ENCODE measurements at regions of chr1 and their contacts with region 1.

Region 1: DNA sequence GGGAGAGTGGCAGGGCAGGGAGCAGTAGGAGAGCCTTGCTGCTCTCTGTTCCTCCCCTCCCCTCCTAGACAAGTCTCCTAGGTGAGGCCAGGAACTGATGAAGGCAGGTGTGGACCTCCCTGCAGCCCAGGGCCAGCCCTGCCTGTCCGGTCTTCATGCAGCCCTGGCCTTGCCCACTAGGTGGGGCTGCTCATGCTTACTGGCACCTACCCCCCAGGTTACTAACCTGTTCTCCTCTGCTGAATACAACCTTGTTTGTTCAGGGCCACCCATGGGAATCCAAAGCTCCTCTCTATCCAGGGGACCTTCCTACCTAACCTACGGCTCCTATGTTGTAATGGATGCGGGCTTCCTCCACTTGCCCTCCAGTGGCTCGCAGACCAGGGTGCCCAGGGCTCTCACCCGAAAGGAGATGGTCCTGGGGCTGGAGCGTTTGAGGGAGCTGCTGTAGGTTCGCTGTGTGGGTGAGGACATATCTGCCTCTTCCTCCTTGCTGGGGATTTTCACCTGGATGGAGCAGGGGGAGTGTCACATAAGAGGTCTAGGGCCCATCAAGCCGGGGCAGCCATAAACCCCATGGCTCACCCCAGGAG is 7.9 kb upstream of the TNNT2 start:
- DNase-seq: peak; percentile 80
- H3K4me3 Mint-ChIP-seq: no peak overlapping the region
- H3K27ac Mint-ChIP-seq: no peak overlapping the region
- H3K4me1 Mint-ChIP-seq: peaks cover 19% of the 10 kb centered on the region
- H3K27me3 Mint-ChIP-seq: no peaks in the 10 kb centered on the region
- CTCF ChIP-seq: peak; percentile 99

Region 2: DNA sequence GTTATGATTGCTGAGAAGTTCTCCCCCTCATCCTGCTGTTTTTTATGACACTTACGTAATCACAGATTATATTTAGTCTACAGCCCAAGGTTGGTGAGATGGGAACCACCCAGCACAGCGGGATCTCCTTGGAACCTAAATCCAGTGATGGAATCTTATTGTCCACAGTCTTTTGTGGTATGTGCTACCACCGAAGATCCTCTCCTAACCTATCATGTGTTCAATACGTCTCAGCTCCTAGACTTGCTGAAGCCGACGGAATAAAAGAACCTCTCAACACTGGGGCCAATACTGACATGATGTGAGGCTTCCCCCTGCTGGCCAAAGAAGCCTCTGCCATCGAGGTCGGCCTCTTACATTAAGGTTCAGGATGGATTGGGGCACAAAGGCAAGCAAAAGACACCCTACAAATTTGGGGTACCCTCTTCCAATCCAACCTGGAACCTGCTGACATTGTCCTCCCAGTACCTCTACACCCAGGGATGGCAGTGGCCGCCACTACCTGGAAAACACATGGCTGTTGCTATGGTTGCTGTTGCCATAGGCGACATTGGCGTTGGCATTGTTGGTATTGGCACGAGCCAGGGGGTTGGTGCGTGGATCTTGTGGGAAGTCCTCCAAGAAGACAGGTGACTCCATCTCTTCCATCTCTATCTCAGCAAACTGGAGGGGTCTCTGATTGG is 342.5 kb before region 1 on chr1:
- CTCF ChIA-PET with region 1: no interaction called
- POLR2A ChIA-PET with region 1: no interaction called
- intact Hi-C with region 1: no loop called
- DNase-seq: peak; percentile 89
- H3K4me3 Mint-ChIP-seq: no peak overlapping the region
- H3K27ac Mint-ChIP-seq: no peak overlapping the region
- H3K4me1 Mint-ChIP-seq: no peaks in the 10 kb centered on the region
- H3K27me3 Mint-ChIP-seq: peaks cover 33% of the 10 kb centered on the region
- CTCF ChIP-seq: peak; percentile 98

Region 3: GRCh38 chr1:201399352-201400126 is 14.1 kb after region 1 on chr1:
- CTCF ChIA-PET with region 1: interaction called, 539 read pairs
- POLR2A ChIA-PET with region 1: interaction called, 5 read pairs
- intact Hi-C with region 1: loop called (anchors 1 kb)
- DNase-seq: peak; percentile 75
- H3K4me3 Mint-ChIP-seq: peak overlapping the region; percentile 66
- H3K27ac Mint-ChIP-seq: no peak overlapping the region
- H3K4me1 Mint-ChIP-seq: peaks cover 24% of the 10 kb centered on the region
- H3K27me3 Mint-ChIP-seq: no peaks in the 10 kb centered on the region
- CTCF ChIP-seq: no peak

Region 4: DNA sequence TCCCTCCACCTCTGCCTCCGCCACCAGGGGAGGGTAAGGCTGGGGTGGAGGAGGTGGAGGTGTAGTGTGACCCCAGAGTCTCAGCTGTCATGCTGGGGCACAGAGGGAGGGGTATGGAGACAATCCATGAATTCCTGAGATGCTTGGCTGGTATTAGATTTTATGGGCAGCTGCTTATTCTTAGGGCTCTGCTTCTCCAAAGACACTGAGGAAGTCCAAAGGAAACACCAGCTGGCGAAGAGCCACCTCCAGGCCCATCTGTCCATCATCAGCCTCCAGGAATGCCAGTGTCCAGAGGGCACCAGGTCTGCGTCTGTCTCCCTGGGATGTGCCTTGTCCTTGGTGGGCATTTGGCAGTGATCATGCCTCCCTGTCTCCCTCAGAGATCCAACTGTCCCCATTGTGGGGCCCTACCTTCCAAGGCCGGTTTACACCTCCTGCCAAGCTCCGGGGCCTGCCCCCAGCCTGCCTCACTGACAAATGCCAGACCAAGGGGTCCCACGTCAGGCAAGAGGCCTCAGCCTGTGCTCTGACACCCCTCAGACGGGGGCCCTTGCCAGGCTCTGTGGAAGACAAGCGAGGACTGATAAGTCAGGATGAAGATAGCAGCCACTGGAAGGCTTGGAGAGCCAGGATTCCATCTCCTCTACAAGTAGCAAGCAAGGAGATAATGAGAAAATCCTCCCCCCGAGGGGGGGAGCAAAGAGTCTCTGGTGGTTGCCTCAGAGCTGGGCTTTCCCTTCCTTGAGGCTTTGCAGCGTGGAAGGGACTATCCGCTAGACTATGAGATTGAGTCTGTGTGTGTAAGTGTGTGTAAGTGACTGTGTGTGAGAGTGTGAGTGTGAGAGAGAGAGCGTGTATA is 34.6 kb after region 1 on chr1:
- CTCF ChIA-PET with region 1: interaction called, 539 read pairs
- POLR2A ChIA-PET with region 1: no interaction called
- intact Hi-C with region 1: no loop called
- DNase-seq: no peak
- H3K4me3 Mint-ChIP-seq: no peak overlapping the region
- H3K27ac Mint-ChIP-seq: no peak overlapping the region
- H3K4me1 Mint-ChIP-seq: no peaks in the 10 kb centered on the region
- H3K27me3 Mint-ChIP-seq: peaks cover 37% of the 10 kb centered on the region
- CTCF ChIP-seq: no peak

Region 5: GRCh38 chr1:201426479-201427310 is 41.3 kb after region 1 on chr1:
- CTCF ChIA-PET with region 1: interaction called, 11 read pairs
- POLR2A ChIA-PET with region 1: no interaction called
- intact Hi-C with region 1: no loop called
- DNase-seq: no peak
- H3K4me3 Mint-ChIP-seq: no peak overlapping the region
- H3K27ac Mint-ChIP-seq: no peak overlapping the region
- H3K4me1 Mint-ChIP-seq: no peaks in the 10 kb centered on the region
- H3K27me3 Mint-ChIP-seq: peaks cover 1% of the 10 kb centered on the region
- CTCF ChIP-seq: no peak